MCF 10A (cell line): ENCODE measurements at regions of chr2 and their contacts with region 1.

Region 1: GRCh38 chr2:222690564-222691200 is 19.2 kb downstream of the MOGAT1 start:
- DNase-seq: peak; percentile 77
- H3K4me3 Mint-ChIP-seq: no peak overlapping the region
- H3K27ac Mint-ChIP-seq: no peak overlapping the region
- H3K4me1 Mint-ChIP-seq: no peaks in the 10 kb centered on the region
- H3K27me3 Mint-ChIP-seq: no peaks in the 10 kb centered on the region
- CTCF ChIP-seq: peak; percentile 98

Region 2: GRCh38 chr2:222677981-222678380 is 12.7 kb before region 1 on chr2:
- CTCF ChIA-PET with region 1: interaction called, 20 read pairs
- POLR2A ChIA-PET with region 1: interaction called, 5 read pairs
- intact Hi-C with region 1: no loop called
- DNase-seq: no peak
- H3K4me3 Mint-ChIP-seq: no peak overlapping the region
- H3K27ac Mint-ChIP-seq: no peak overlapping the region
- H3K4me1 Mint-ChIP-seq: no peaks in the 10 kb centered on the region
- H3K27me3 Mint-ChIP-seq: peaks cover 54% of the 10 kb centered on the region
- CTCF ChIP-seq: no peak

Region 3: DNA sequence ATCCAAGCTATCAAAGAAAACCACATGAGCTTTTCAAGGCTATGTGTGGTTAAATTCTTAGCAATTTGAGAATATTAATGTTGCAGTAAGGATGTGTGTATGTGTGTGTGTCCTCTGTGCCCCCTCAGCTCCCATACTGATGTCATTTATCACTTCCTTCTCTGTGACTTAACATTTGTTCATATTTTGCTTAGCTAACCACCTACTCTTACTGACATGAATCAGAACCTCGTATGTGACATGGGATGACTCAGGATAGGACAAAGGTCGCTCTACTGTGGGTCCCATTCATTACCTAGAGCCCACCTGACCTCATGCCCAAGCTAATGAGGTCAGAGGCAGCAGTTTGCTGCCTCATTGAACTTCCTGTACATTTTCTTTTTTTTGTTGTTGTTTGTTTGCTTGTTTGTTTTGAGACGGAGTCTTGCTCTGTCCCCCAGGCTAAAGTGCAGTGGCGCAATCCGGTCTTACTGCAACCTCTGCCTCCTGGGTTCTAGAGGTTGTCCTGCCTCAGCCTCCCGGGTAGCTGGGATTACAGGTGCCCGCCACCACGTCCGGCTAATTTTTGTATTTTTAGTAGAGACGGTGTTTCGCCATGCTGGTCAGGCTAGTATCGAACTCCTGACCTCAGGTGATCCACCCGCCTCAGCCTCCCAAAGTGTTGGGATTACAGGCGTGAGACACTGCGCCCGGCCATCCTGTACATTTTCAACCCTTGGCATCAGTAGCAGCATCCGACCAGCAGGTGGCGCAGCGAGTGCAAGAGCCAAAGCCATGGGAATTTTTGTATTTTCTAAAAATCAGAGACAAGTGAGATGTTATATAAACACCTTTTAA is 17.2 kb after region 1 on chr2:
- CTCF ChIA-PET with region 1: interaction called, 53 read pairs
- POLR2A ChIA-PET with region 1: no interaction called
- intact Hi-C with region 1: no loop called
- DNase-seq: peak; percentile 71
- H3K4me3 Mint-ChIP-seq: no peak overlapping the region
- H3K27ac Mint-ChIP-seq: no peak overlapping the region
- H3K4me1 Mint-ChIP-seq: peaks cover 5% of the 10 kb centered on the region
- H3K27me3 Mint-ChIP-seq: no peaks in the 10 kb centered on the region
- CTCF ChIP-seq: peak; percentile 90

Region 4: DNA sequence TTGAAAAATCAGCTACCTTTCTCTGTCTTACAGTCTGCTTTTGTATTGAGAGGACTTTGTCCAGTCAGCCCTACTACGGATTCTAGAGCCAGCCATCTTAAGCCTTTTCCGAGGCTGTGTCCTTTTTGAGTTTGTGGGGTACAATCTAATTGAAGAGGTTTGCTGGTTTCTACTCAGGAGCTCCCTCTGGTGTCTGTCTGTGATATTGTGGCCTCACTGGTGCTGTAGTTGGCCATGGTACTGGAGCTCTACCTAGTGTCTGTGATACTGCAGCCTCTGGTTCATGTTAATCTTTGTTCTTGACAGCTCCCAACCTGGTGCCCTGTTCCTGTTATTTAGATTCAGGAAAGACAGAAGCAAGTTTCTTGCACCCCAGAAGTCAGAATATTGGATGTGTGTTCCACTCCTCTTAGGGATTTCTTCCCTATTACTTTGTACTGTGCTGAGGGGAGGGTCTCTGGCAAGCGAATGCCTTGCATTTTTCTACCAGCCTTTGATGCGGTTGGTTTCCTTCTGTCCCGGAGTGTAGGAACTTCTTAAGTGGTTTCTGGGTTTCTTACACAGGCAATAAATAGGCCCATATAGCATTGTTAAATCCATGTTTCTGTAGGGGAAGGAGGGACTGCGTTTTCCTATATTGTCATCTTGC is 248.7 kb after region 1 on chr2:
- CTCF ChIA-PET with region 1: interaction called, 16 read pairs
- POLR2A ChIA-PET with region 1: interaction called, 6 read pairs
- intact Hi-C with region 1: loop called (anchors 1 kb)
- DNase-seq: peak; percentile 81
- H3K4me3 Mint-ChIP-seq: no peak overlapping the region
- H3K27ac Mint-ChIP-seq: peak overlapping the region; percentile 0
- H3K4me1 Mint-ChIP-seq: peaks cover 7% of the 10 kb centered on the region
- H3K27me3 Mint-ChIP-seq: no peaks in the 10 kb centered on the region
- CTCF ChIP-seq: peak; percentile 82